ENCODE measurements at regions of chr9 and their contacts with region 1.

Region 1: GRCh38 chr9:127586537-127586936 is 25.5 kb upstream of the STXBP1 start:
- DNase-seq: no peak
- H3K4me3 ChIP-seq: no peak overlapping the region
- CTCF ChIP-seq: peak; percentile 92

Region 2: DNA sequence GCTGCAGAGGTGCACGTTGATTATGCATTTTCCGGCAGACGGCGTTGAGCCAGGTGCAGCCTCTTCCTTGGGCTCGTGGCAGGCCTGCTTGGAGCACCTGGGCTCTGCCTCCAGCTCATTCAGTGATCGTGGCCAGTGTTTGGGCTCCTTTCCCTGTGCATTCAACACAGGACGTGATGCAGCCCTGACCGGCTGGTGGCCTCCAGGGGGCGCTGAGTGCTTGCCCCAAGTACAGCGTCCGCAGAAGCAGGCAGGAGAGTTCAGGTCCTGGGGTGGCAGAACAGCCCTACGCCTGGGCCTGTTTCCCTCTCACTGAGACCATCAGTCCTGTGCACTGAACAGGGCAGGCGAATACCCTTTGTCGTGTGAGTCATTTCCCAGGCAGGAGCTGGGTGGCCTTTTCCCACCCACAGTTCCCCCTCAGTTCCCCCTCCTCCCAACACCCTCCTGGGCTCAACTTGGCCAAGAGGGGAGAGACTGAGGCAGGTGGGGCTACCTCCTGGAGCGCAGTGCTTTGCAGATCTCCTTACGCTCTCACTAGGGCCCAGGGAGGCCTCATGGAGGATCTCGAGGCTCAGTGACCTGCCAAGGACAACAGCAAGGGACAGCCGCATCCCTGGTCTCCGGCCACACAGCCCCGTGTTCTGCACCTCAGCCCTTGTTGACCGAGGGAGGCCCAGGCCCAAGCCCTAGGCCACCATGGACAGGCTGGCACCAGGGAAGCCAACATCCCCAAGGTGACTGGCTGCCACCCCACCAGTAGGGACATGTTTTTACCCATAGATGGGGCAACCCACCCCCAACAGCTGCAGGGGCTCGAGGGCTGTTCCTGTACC is 82.4 kb before region 1 on chr9:
- CTCF ChIA-PET with region 1: interaction called, 322 read pairs
- POLR2A ChIA-PET with region 1: no interaction called
- DNase-seq: no peak
- H3K4me3 ChIP-seq: no peak overlapping the region
- CTCF ChIP-seq: peak; percentile 95

Region 3: GRCh38 chr9:127519301-127520166 is 67.0 kb before region 1 on chr9:
- CTCF ChIA-PET with region 1: interaction called, 57 read pairs
- POLR2A ChIA-PET with region 1: interaction called, 5 read pairs
- DNase-seq: peak; percentile 81
- H3K4me3 ChIP-seq: no peak overlapping the region
- CTCF ChIP-seq: no peak

Region 4: GRCh38 chr9:127537792-127538191 is 48.7 kb before region 1 on chr9:
- CTCF ChIA-PET with region 1: interaction called, 16 read pairs
- POLR2A ChIA-PET with region 1: no interaction called
- DNase-seq: no peak
- H3K4me3 ChIP-seq: no peak overlapping the region
- CTCF ChIP-seq: peak; percentile 25

Region 5: GRCh38 chr9:127734747-127735529 is 148.4 kb after region 1 on chr9 and contains the start of gene TOR2A:
- CTCF ChIA-PET with region 1: interaction called, 156 read pairs
- POLR2A ChIA-PET with region 1: interaction called, 3 read pairs
- DNase-seq: no peak
- H3K4me3 ChIP-seq: peak within 1 kb of the TSS; percentile 75
- CTCF ChIP-seq: peak; percentile 98

Region 6: DNA sequence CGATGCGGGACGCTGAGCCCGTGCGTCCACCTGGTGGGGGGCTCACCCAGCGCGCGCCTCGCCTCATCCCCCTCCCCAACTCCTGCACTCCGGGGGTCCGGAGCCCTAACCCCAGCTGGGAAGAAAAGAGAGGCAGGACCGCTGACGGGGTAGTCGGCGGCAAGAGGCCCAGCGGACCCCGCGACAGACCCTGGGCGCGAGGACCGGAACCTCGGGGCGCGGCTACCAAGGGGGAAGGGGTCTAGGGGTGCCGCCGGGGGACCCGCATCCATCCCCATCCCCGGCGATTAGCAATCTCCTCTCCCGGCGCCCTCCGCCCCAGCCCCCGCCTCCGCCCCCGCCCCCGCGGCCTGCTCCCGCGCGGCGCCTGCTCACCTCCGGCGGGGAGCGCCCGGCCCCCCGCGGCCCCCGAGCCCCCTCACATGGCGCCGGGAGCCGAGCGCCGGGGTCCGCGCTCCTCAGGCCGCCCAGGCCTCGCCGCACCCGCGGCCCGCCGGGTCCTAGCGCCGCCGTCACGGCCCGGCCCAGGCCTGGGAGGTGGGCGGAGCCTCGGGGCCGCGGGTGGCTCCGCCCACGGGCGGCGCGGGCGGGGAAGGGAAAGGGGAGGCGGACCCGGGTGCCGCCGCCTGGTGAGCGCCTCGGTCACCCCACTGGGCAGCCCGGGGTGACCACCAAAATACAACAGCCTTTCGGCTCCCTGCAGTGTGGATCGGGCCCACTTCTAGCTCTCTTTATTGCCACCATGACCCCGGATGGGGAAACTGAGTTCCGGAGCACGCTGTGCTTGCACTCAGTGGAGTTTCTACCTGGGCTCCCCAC is 312.8 kb after region 1 on chr9 and contains the start of gene ST6GALNAC6:
- CTCF ChIA-PET with region 1: no interaction called
- POLR2A ChIA-PET with region 1: no interaction called
- DNase-seq: no peak
- H3K4me3 ChIP-seq: peak within 1 kb of the TSS; percentile 85
- CTCF ChIP-seq: no peak

Region 7: GRCh38 chr9:127916665-127917613 is 330.4 kb after region 1 on chr9 and contains the start of gene ST6GALNAC4:
- CTCF ChIA-PET with region 1: interaction called, 119 read pairs
- POLR2A ChIA-PET with region 1: interaction called, 3 read pairs
- DNase-seq: no peak
- H3K4me3 ChIP-seq: peak within 1 kb of the TSS; percentile 74
- CTCF ChIP-seq: no peak